Left ventricle myocardium inferior (tissue), 1 donor: ENCODE measurements at regions of chr9 and their contacts with region 1.

Region 1: GRCh38 chr9:111896353-111896958 is at the start of gene UGCG:
- DNase-seq: peak; percentile 90
- H3K4me3 ChIP-seq: peak within 1 kb of the TSS; percentile 91
- H3K27ac ChIP-seq: peak within 1 kb of the TSS; percentile 94
- H3K4me1 ChIP-seq: peaks cover 54% of the 10 kb centered on the region
- H3K27me3 ChIP-seq: no peaks in the 10 kb centered on the region
- CTCF ChIP-seq: no peak
- total RNA-seq, gene UGCG: 12.7 TPM

Region 2: GRCh38 chr9:111866976-111867375 is 29.5 kb before region 1 on chr9:
- intact Hi-C with region 1: no loop called
- DNase-seq: no peak
- H3K4me3 ChIP-seq: no peak overlapping the region
- H3K27ac ChIP-seq: no peak overlapping the region
- H3K4me1 ChIP-seq: no peaks in the 10 kb centered on the region
- H3K27me3 ChIP-seq: no peaks in the 10 kb centered on the region
- CTCF ChIP-seq: no peak

Region 3: GRCh38 chr9:112074250-112075008 is 178.0 kb after region 1 on chr9:
- intact Hi-C with region 1: loop called (anchors 10 kb)
- DNase-seq: peak; percentile 28
- H3K4me3 ChIP-seq: peak overlapping the region; percentile 32
- H3K27ac ChIP-seq: peak overlapping the region; percentile 76
- H3K4me1 ChIP-seq: peaks cover 50% of the 10 kb centered on the region
- H3K27me3 ChIP-seq: no peaks in the 10 kb centered on the region
- CTCF ChIP-seq: peak; percentile 95